Naive thymus-derived CD4-positive, alpha-beta T cell (primary cell): ENCODE measurements at regions of chr17 and their contacts with region 1.

Region 1: GRCh38 chr17:67517325-67517724 is 140.2 kb downstream of the PITPNC1 start:
- DNase-seq: no peak
- ATAC-seq: no peak
- H3K4me3 ChIP-seq: no peak overlapping the region
- H3K4me3 Mint-ChIP-seq: peak overlapping the region in 1 of 10 donors; percentile 28
- H3K27ac ChIP-seq: no peak overlapping the region
- H3K27ac Mint-ChIP-seq: peak overlapping the region in 3 of 9 donors; percentile 20 to 79 (median 28)
- H3K4me1 ChIP-seq: peaks cover 4 to 8% of the 10 kb centered on the region in 2 donors
- H3K4me1 Mint-ChIP-seq: peaks cover 26 to 81% (median 75%) of the 10 kb centered on the region in 7 donors
- H3K27me3 ChIP-seq: no peaks in the 10 kb centered on the region
- H3K27me3 Mint-ChIP-seq: no peaks in the 10 kb centered on the region

Region 2: DNA sequence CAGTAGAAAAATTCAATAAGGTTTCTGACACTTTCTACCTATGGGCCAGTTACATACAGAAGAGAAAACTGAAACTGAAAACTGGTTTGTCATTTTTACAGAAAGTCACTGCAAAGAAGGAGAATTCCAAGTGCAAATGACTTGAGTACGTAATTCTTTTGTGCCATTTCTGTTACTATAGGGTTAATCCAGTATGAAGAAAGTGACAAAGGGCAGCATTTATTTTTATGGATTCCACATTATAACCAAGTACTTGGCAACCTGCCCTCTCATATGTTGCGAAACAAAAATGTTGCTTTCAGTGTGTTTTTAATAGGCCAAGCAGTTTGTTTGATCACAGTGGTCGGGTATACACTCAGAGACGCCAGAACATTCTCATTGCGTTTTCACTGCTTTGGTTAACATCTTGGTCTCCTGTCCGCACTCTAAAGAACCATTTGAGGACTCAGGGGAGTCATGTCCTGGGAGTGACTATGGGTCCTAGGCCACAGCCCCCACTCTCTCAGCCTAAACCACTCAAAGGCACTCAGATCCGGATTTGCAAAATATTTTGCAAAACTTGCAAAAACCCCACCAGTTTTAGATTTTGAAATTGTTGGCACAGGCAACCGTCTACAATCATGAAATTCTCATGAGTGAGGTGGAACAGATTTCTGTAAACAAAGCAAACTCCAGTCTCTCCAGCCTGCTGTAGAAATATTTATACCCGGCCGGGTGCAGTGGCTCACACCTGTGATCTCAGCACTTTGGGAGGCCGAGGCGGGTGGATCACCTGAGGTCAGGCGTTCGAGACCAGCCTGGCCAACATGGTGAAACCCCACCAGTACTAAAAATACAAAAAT is 256.9 kb before region 1 on chr17:
- CTCF ChIA-PET with region 1: no interaction called
- POLR2A ChIA-PET with region 1: no interaction called
- intact Hi-C with region 1: no loop called
- DNase-seq: no peak
- ATAC-seq: peak; percentile 36
- H3K4me3 ChIP-seq: no peak overlapping the region
- H3K4me3 Mint-ChIP-seq: peak overlapping the region in 1 of 10 donors; percentile 37
- H3K27ac ChIP-seq: no peak overlapping the region
- H3K27ac Mint-ChIP-seq: peak overlapping the region in 1 of 9 donors; percentile 52
- H3K4me1 ChIP-seq: peaks cover 9 to 25% of the 10 kb centered on the region in 2 donors
- H3K4me1 Mint-ChIP-seq: peaks cover 14 to 38% (median 20%) of the 10 kb centered on the region in 7 donors
- H3K27me3 ChIP-seq: no peaks in the 10 kb centered on the region
- H3K27me3 Mint-ChIP-seq: no peaks in the 10 kb centered on the region

Region 3: DNA sequence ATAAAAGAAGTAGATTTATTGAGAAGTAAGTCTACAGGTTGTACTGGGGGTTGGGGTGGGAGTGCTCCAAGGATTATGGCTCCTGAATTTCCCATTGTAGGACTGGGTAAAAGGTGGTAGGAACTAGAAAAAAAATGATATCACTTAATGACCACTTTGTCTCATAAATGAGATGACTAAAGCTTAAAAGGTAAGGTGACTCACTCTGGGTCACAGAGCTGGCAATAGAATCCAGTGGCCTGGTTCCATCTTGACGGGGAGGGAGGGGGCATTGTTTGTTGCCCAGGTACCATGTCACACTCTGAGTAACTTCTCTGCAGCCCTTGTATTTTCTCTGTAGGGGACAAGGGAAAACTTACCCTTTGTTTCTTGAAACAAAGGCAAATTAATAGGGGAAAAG is 14.1 kb before region 1 on chr17:
- CTCF ChIA-PET with region 1: no interaction called
- POLR2A ChIA-PET with region 1: no interaction called
- intact Hi-C with region 1: loop called in 1 of 2 experiments (anchors 1 kb)
- DNase-seq: no peak
- ATAC-seq: no peak
- H3K4me3 ChIP-seq: no peak overlapping the region
- H3K4me3 Mint-ChIP-seq: peak overlapping the region in 6 of 10 donors; percentile 6 to 43 (median 18)
- H3K27ac ChIP-seq: no peak overlapping the region
- H3K27ac Mint-ChIP-seq: peak overlapping the region in 7 of 9 donors; percentile 16 to 75 (median 41)
- H3K4me1 ChIP-seq: peaks cover 6 to 7% of the 10 kb centered on the region in 2 donors
- H3K4me1 Mint-ChIP-seq: peaks cover 15 to 92% (median 80%) of the 10 kb centered on the region in 7 donors
- H3K27me3 ChIP-seq: no peaks in the 10 kb centered on the region
- H3K27me3 Mint-ChIP-seq: no peaks in the 10 kb centered on the region

Region 4: DNA sequence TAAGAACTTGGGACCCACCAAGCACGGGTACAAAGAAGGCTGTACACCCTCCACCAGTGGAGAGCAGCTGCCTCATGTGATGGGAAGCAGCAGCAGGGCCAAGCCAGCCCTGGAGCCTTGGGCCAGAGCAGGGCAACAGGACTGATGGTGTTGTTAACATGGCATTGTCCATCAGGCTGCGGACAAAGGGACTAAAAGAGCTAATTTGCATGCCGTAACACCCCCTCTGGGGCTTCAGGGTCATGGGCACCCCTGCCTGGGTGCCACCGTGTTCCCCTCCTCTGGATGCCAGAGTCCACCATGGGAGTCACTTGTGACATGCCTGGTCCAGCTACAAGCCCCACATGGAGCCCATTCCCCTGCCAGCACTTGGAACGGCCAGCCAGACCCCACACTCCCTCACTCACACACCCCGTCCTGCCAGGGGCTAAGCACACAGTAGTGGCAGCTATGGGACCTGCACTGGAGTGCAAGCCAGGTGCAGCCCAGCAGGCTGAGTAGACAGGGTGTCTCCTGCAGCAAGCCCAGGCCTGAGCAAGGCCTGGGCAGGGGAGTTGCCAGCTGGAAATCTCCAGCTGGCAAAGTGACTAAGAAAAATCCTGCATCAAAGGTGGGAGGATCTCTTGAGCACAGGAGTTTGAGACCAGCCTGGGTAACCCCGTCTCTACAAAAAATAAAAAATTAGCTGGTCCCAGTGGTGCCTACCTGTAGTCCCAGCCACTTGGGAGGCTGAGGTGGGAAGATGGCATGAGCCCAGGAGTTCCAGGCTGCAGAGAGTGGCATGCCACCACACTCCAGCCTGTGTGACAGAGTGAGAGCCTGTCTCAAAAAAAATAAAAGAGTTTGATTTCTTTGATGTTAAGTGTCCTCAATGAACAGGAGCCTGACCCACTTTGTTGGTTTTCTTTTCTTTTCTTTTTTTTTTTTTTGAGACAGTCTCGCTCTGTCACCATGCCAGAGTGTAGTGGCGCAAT is 234.1 kb after region 1 on chr17:
- CTCF ChIA-PET with region 1: no interaction called
- POLR2A ChIA-PET with region 1: no interaction called
- intact Hi-C with region 1: no loop called
- DNase-seq: no peak
- ATAC-seq: no peak
- H3K4me3 ChIP-seq: no peak overlapping the region
- H3K4me3 Mint-ChIP-seq: no peak overlapping the region
- H3K27ac ChIP-seq: no peak overlapping the region
- H3K27ac Mint-ChIP-seq: no peak overlapping the region
- H3K4me1 ChIP-seq: no peaks in the 10 kb centered on the region
- H3K4me1 Mint-ChIP-seq: peaks cover 0 to 7% (median 3%) of the 10 kb centered on the region in 7 donors
- H3K27me3 ChIP-seq: no peaks in the 10 kb centered on the region
- H3K27me3 Mint-ChIP-seq: no peaks in the 10 kb centered on the region